Ascending aorta (tissue), 2 donors: ENCODE measurements at regions of chr6 and their contacts with region 1.

Region 1: GRCh38 chr6:16128759-16129622 is at the start of gene MYLIP:
- DNase-seq: peak; percentile 92 to 99
- H3K4me3 ChIP-seq: peak within 1 kb of the TSS; percentile 94 to 96
- H3K27ac ChIP-seq: peak within 1 kb of the TSS; percentile 93 to 98
- H3K4me1 ChIP-seq: peaks cover 0 to 24% of the 10 kb centered on the region in 2 donors
- H3K27me3 ChIP-seq: no peaks in the 10 kb centered on the region
- CTCF ChIP-seq: peak; percentile 67 to 83 (median 75)
- total RNA-seq, gene MYLIP: 36.1 TPM

Region 2: DNA sequence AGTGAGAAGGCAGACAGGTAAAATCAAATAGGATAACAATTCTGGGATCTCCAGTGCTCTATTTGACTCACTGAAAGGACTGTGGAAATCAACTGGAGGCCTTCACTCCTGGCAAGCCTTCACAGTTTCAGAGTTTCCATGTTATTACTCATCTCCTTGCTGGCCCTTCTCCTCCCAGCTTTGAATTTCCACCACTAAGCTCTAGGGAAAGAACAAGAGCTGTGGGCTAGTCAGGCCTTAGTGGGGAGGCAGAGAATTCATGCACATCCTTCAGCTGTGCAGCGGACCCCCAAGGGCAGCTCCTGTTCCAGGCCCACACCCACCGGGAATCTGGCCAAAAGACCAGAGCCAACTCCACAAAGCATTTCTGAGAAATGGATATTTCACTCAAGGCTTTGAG is 25.9 kb after region 1 on chr6:
- intact Hi-C with region 1: loop called (anchors 2 kb)
- DNase-seq: peak in 1 of 2 donors; percentile 72
- H3K4me3 ChIP-seq: no peak overlapping the region
- H3K27ac ChIP-seq: peak overlapping the region; percentile 33 to 43
- H3K4me1 ChIP-seq: peaks cover 0 to 3% of the 10 kb centered on the region in 2 donors
- H3K27me3 ChIP-seq: no peaks in the 10 kb centered on the region
- CTCF ChIP-seq: no peak

Region 3: DNA sequence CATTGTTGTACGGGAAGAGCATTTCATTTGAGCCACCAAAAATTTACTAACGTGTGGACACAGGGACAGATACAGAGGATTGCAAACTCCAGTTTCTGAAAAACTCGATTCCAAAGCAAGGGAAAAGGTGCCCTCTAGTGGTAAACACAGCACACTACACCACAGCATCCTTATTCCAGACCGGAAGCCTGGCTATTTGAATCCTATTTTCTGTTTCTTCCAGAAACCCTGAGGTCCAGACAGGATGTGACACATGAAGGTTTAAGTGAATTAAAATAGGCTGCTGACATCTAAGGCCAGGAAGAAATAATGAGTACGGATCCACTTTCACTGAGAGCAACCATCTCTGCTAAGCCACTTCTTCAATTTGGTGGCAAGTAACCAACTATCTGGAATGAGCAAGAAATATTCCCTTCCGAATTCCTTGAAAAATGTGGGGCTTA is 77.6 kb after region 1 on chr6:
- intact Hi-C with region 1: loop called (anchors 1 kb)
- DNase-seq: peak in 1 of 2 donors; percentile 88
- H3K4me3 ChIP-seq: no peak overlapping the region
- H3K27ac ChIP-seq: peak overlapping the region; percentile 65 to 76
- H3K4me1 ChIP-seq: peaks cover 0 to 21% of the 10 kb centered on the region in 2 donors
- H3K27me3 ChIP-seq: no peaks in the 10 kb centered on the region
- CTCF ChIP-seq: peak; percentile 92 to 96 (median 95)

Region 4: DNA sequence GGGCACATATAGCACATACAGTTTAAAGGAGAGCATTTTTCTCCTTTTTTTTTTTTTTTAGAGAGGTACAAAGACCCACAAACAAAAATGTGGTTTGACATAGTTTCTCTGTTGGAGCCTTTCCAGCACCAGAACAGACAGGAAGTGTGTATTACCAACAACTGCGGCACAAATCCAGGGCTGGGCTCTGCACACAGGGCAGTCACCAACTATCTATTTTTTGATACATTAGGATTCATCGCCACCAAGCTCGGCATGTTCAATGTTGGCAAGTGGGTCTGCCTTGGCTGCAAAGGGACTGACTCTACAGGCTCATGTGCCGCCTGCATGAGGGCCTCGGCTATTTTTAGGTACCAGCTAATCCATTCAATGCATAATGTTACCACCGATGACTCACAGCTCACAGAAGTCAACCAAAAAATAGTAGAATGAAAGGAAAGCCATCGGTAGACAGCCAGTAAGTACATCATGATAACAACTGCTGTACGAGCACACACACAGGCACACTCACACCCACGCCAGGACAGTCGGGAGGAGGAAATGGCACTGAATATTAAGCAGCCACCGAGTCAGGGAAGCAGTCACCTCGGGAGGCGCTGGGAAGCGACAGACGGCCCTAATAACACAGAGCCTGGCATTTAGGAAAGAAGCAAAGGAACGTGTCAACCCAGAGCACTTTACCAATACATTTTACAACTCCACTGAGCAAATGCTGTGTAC is 191.0 kb after region 1 on chr6:
- intact Hi-C with region 1: loop called (anchors 5 kb)
- DNase-seq: peak; percentile 88 to 94
- H3K4me3 ChIP-seq: peak overlapping the region; percentile 42 to 56
- H3K27ac ChIP-seq: peak overlapping the region; percentile 96
- H3K4me1 ChIP-seq: peaks cover 11 to 63% of the 10 kb centered on the region in 2 donors
- H3K27me3 ChIP-seq: no peaks in the 10 kb centered on the region
- CTCF ChIP-seq: no peak